CD14-positive monocyte (primary cell): ENCODE measurements at regions of chr3 and their contacts with region 1.

Region 1: DNA sequence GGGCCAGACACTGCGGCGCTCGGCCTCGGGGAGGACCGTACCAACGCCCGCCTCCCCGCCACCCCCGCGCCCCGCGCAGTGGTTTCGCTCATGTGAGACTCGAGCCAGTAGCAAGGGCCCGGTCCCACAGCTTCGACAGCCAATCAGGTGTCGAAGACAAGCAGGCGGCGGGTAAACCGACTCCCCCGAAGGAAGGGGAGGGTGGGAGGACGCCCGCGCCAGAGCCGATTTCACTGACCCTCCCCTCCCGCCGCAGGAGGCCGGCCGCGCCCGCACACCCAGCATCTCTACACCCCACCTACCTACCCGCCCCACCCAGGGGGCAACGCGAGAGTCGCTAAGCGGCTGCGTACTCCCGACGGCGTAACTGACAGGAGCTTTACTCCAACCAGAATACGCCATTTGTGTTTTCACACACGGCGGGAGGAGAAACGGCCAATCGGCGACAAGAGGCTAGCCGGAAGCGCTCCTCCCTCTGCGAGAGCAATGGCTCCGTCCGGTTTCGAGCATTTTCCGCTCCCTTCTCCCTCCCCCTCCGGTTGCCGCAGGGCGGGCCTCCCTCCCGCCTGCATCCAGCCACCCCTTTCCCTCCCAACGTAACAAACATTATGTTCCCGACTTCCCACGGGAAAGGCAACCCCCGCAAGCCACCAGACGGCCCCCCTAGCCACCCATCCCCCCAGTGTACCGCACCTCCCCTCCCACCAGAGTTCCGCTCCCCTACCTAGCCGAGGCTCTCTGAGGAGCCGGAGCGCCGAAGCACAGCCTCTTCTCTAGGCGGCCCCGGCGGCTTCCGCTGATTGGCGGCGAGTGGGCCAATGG is 504 bp upstream of the SETD5 start:
- DNase-seq: peak; percentile 96 to 98 (median 96)
- H3K4me3 ChIP-seq: peak overlapping the region; percentile 49 to 86 (median 75)
- H3K4me3 Mint-ChIP-seq: peak overlapping the region; percentile 91 to 92
- H3K27ac ChIP-seq: peak overlapping the region; percentile 96 to 99
- H3K27ac Mint-ChIP-seq: peak overlapping the region; percentile 98 to 100 (median 99)
- H3K4me1 ChIP-seq: peaks cover 27 to 60% of the 10 kb centered on the region in 2 donors
- H3K4me1 Mint-ChIP-seq: peaks cover 59% of the 10 kb centered on the region
- H3K27me3 ChIP-seq: no peaks in the 10 kb centered on the region
- H3K27me3 Mint-ChIP-seq: peaks cover 0 to 1% (median 0%) of the 10 kb centered on the region in 3 donors
- CTCF ChIP-seq: no peak

Region 2: GRCh38 chr3:9349321-9350117 is 47.4 kb before region 1 on chr3:
- intact Hi-C with region 1: no loop called
- DNase-seq: no peak
- H3K4me3 ChIP-seq: no peak overlapping the region
- H3K4me3 Mint-ChIP-seq: no peak overlapping the region
- H3K27ac ChIP-seq: no peak overlapping the region
- H3K27ac Mint-ChIP-seq: no peak overlapping the region
- H3K4me1 ChIP-seq: peaks cover 8% of the 10 kb centered on the region in 2 donors
- H3K4me1 Mint-ChIP-seq: peaks cover 17% of the 10 kb centered on the region
- H3K27me3 ChIP-seq: no peaks in the 10 kb centered on the region
- H3K27me3 Mint-ChIP-seq: peaks cover 0 to 2% (median 1%) of the 10 kb centered on the region in 3 donors
- CTCF ChIP-seq: no peak

Region 3: GRCh38 chr3:9362731-9363530 is 34.0 kb before region 1 on chr3 and contains the start of gene THUMPD3:
- intact Hi-C with region 1: loop called (anchors 5 kb)
- DNase-seq: peak; percentile 95 to 99 (median 98)
- H3K4me3 ChIP-seq: peak within 1 kb of the TSS; percentile 90 to 95 (median 92)
- H3K4me3 Mint-ChIP-seq: peak within 1 kb of the TSS; percentile 94
- H3K27ac ChIP-seq: peak within 1 kb of the TSS; percentile 98 to 100
- H3K27ac Mint-ChIP-seq: peak within 1 kb of the TSS; percentile 98 to 100 (median 99)
- H3K4me1 ChIP-seq: peaks cover 13 to 15% of the 10 kb centered on the region in 2 donors
- H3K4me1 Mint-ChIP-seq: peaks cover 8% of the 10 kb centered on the region
- H3K27me3 ChIP-seq: no peaks in the 10 kb centered on the region
- H3K27me3 Mint-ChIP-seq: peaks cover 2 to 6% (median 5%) of the 10 kb centered on the region in 3 donors
- CTCF ChIP-seq: no peak
- polyA plus RNA-seq, gene THUMPD3: 10.2 to 13.1 (median 11.5) TPM